ENCODE measurements at regions of chr19 and their contacts with region 1.

Region 1: DNA sequence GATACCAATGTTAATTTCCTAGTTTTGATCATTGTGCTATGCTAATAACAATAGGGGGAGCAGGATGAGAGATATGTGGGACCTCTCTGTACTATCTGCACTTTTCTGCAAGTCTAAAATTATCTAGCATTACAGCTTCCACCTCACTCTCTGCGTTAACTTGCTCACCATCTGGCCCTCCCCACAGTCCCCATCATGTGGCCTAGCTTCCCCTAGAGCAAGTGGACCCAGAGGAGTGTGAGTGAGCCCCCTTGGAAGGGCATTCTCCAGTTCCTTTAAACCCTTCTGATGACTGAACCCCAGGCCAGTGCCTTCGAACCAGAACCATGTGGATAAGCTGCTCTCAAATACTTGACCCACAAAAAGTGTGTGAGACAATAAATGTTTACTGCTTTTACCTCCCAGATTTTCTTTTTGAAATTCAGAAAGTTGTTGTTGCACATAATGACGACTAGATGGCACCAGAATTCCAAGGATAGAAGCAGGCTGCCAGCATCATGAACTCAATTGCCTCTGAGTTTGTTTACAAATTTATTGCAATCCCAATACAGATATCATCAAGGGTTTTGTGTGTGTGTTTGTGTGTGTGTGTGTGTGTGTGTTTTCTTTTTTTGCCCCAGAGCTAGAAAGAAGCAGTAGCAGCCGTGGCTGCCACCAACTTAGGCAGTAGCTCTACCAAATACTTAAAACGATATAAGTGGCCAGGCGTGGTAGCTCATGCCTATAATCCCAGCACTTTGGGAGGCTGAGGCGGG is 49.0 kb upstream of the ZNF780A start:
- DNase-seq: peak in 1 of 2 donors; percentile 81
- ATAC-seq: peak; percentile 28 to 55 (median 38)
- H3K4me3 ChIP-seq: no peak overlapping the region
- H3K4me3 Mint-ChIP-seq: peak overlapping the region; percentile 33
- H3K27ac ChIP-seq: no peak overlapping the region
- H3K27ac Mint-ChIP-seq: peak overlapping the region in 1 of 2 donors; percentile 40
- H3K4me1 ChIP-seq: peaks cover 28% of the 10 kb centered on the region
- H3K4me1 Mint-ChIP-seq: peaks cover 22 to 32% of the 10 kb centered on the region in 2 donors
- H3K27me3 ChIP-seq: no peaks in the 10 kb centered on the region
- H3K27me3 Mint-ChIP-seq: peaks cover 0 to 9% of the 10 kb centered on the region in 2 donors
- CTCF ChIP-seq: peak; percentile 78

Region 2: GRCh38 chr19:40119380-40119779 is 20.3 kb before region 1 on chr19:
- intact Hi-C with region 1: no loop called
- DNase-seq: no peak
- ATAC-seq: no peak
- H3K4me3 ChIP-seq: no peak overlapping the region
- H3K4me3 Mint-ChIP-seq: no peak overlapping the region
- H3K27ac ChIP-seq: no peak overlapping the region
- H3K27ac Mint-ChIP-seq: no peak overlapping the region
- H3K4me1 ChIP-seq: no peaks in the 10 kb centered on the region
- H3K4me1 Mint-ChIP-seq: peaks cover 4 to 6% of the 10 kb centered on the region in 2 donors
- H3K27me3 ChIP-seq: no peaks in the 10 kb centered on the region
- H3K27me3 Mint-ChIP-seq: peaks cover 12 to 17% of the 10 kb centered on the region in 2 donors
- CTCF ChIP-seq: no peak

Region 3: DNA sequence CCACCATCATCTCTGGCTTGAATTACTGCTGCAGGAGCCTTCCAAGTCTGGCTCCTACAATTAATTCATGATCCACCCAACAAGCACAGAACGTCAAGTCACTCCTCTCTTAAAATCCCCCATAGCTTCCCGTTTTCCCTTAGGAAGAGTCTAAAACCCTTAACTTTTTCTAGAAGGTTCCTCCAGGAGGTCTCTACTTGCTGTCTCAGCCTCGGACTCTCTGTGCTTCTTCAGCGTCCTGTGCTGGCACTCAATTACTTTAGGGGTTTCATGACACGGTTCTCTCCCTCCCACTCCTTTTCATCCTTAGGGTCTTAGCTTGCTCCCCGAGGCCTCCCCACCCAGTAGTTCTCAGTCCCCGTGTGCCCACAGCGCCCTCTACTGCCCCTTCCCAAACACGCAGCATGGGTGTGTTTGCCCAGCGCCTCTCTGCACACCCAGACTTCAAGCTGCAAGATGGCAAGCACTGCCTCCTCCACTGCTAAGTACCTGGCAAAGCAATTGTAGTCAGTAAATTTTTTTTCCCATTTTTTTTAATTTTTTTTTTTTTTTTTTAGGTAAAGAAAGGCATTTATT is 25.7 kb after region 1 on chr19:
- intact Hi-C with region 1: loop called (anchors 1 kb)
- DNase-seq: peak; percentile 63 to 80
- ATAC-seq: peak; percentile 79 to 91 (median 79)
- H3K4me3 ChIP-seq: no peak overlapping the region
- H3K4me3 Mint-ChIP-seq: peak overlapping the region; percentile 17
- H3K27ac ChIP-seq: no peak overlapping the region
- H3K27ac Mint-ChIP-seq: peak overlapping the region; percentile 20 to 72
- H3K4me1 ChIP-seq: peaks cover 37% of the 10 kb centered on the region
- H3K4me1 Mint-ChIP-seq: peaks cover 23 to 24% of the 10 kb centered on the region in 2 donors
- H3K27me3 ChIP-seq: no peaks in the 10 kb centered on the region
- H3K27me3 Mint-ChIP-seq: no peaks in the 10 kb centered on the region
- CTCF ChIP-seq: peak; percentile 72

Region 4: GRCh38 chr19:40221858-40222837 is 82.4 kb after region 1 on chr19:
- intact Hi-C with region 1: loop called (anchors 1 kb)
- DNase-seq: peak; percentile 68 to 90
- ATAC-seq: peak; percentile 85 to 87 (median 87)
- H3K4me3 ChIP-seq: no peak overlapping the region
- H3K4me3 Mint-ChIP-seq: peak overlapping the region; percentile 60
- H3K27ac ChIP-seq: no peak overlapping the region
- H3K27ac Mint-ChIP-seq: peak overlapping the region in 1 of 2 donors; percentile 74
- H3K4me1 ChIP-seq: peaks cover 24% of the 10 kb centered on the region
- H3K4me1 Mint-ChIP-seq: peaks cover 23 to 24% of the 10 kb centered on the region in 2 donors
- H3K27me3 ChIP-seq: peaks cover 39% of the 10 kb centered on the region
- H3K27me3 Mint-ChIP-seq: peaks cover 46 to 47% of the 10 kb centered on the region in 2 donors
- CTCF ChIP-seq: peak; percentile 86

Region 5: GRCh38 chr19:40285353-40286234 is 145.9 kb after region 1 on chr19:
- intact Hi-C with region 1: loop called (anchors 10 kb)
- DNase-seq: peak; percentile 95 to 100
- ATAC-seq: peak; percentile 77 to 93 (median 84)
- H3K4me3 ChIP-seq: peak overlapping the region; percentile 72
- H3K4me3 Mint-ChIP-seq: peak overlapping the region; percentile 87
- H3K27ac ChIP-seq: peak overlapping the region; percentile 98
- H3K27ac Mint-ChIP-seq: peak overlapping the region; percentile 99
- H3K4me1 ChIP-seq: peaks cover 47% of the 10 kb centered on the region
- H3K4me1 Mint-ChIP-seq: peaks cover 31 to 51% of the 10 kb centered on the region in 2 donors
- H3K27me3 ChIP-seq: no peaks in the 10 kb centered on the region
- H3K27me3 Mint-ChIP-seq: no peaks in the 10 kb centered on the region
- CTCF ChIP-seq: no peak

Region 6: GRCh38 chr19:40640744-40641143 is 501.0 kb after region 1 on chr19:
- intact Hi-C with region 1: loop called (anchors 2 kb)
- DNase-seq: no peak
- ATAC-seq: peak in 1 of 3 donors; percentile 17
- H3K4me3 ChIP-seq: no peak overlapping the region
- H3K4me3 Mint-ChIP-seq: no peak overlapping the region
- H3K27ac ChIP-seq: no peak overlapping the region
- H3K27ac Mint-ChIP-seq: no peak overlapping the region
- H3K4me1 ChIP-seq: no peaks in the 10 kb centered on the region
- H3K4me1 Mint-ChIP-seq: no peaks in the 10 kb centered on the region
- H3K27me3 ChIP-seq: no peaks in the 10 kb centered on the region
- H3K27me3 Mint-ChIP-seq: no peaks in the 10 kb centered on the region
- CTCF ChIP-seq: no peak

Measured in natural killer cell (primary cell).